Heart right ventricle (tissue), 16 donors: ENCODE measurements at regions of chr4 and their contacts with region 1.

Region 1: GRCh38 chr4:40525811-40526598 is 103.7 kb downstream of the RBM47 start:
- DNase-seq: peak in 1 of 2 donors; percentile 48
- ATAC-seq: peak; percentile 55 to 92 (median 72)
- H3K4me3 ChIP-seq: no peak overlapping the region
- H3K27ac ChIP-seq: peak overlapping the region in 8 of 10 donors; percentile 5 to 79 (median 58)
- H3K4me1 ChIP-seq: peaks cover 0 to 21% (median 6%) of the 10 kb centered on the region in 9 donors
- H3K27me3 ChIP-seq: no peaks in the 10 kb centered on the region
- CTCF ChIP-seq: no peak

Region 2: GRCh38 chr4:40395908-40396793 is 129.9 kb before region 1 on chr4:
- intact Hi-C with region 1: loop called in 1 of 10 experiments (anchors 10 kb)
- DNase-seq: peak; percentile 36 to 42
- ATAC-seq: peak in 7 of 8 donors; percentile 33 to 74 (median 56)
- H3K4me3 ChIP-seq: no peak overlapping the region
- H3K27ac ChIP-seq: no peak overlapping the region
- H3K4me1 ChIP-seq: peaks cover 0 to 19% (median 8%) of the 10 kb centered on the region in 9 donors
- H3K27me3 ChIP-seq: no peaks in the 10 kb centered on the region
- CTCF ChIP-seq: no peak